ENCODE measurements at regions of chr15 and their contacts with region 1.

Region 1: DNA sequence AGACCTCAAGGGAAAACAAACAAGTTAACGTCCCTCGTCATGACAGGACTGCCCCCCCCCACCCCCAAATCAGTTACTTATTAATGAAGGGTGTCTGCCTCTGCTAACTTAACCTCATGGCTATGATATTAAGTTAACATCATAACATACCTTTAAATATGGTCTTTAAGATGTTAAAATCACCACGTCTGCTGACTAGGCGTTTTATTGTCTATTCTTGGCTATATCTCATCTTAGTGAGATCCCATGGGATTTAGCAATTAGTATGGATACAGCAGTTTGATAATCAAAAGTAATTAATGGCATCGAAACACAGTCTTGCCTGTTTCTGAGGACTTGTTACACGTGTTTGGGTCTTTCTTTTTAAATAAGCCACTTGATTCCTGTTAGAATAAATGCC is 186.9 kb downstream of the FOXB1 start:
- DNase-seq: no peak
- ATAC-seq: no peak
- H3K4me3 ChIP-seq: no peak overlapping the region
- H3K27ac ChIP-seq: no peak overlapping the region
- H3K4me1 ChIP-seq: no peaks in the 10 kb centered on the region
- CTCF ChIP-seq: no peak
- EP300 ChIP-seq: no peak
- POLR2A ChIP-seq: no peak
- RAD21 ChIP-seq: no peak

Region 2: DNA sequence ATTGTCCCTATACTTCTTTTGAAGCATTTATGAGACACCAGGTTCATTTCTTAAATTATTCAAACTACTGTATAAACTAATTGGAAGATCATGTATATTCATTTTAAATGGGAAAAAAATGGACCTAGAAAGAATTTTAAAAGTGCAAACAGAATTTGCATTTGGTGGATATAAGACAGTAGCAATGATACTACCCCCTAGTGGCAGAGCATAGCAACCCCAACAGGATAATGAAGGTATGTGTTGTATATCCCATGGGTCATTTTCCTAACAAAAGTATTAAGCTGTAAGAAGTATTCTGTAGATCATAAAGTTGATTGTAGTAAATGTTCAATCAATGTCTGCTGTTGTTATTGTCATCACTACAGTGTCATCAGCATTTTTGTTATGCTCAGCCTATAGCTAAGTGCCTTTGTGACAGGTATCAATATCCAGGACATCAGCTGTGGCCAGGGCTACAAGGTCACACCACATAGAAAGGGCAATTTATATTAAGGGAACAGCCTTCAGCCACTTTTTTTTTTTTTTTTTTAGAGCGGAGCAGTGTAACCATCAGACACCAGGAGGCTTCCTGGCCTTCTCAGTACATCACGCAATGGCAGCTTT is 11.1 kb before region 1 on chr15:
- CTCF ChIA-PET with region 1: interaction called, 16 read pairs
- POLR2A ChIA-PET with region 1: no interaction called
- DNase-seq: peak; percentile 50 to 60
- ATAC-seq: peak; percentile 72 to 91; a peak in 4 of 6 replicates
- H3K4me3 ChIP-seq: no peak overlapping the region
- H3K27ac ChIP-seq: no peak overlapping the region
- H3K4me1 ChIP-seq: no peaks in the 10 kb centered on the region
- CTCF ChIP-seq: peak; percentile 85
- EP300 ChIP-seq: no peak
- POLR2A ChIP-seq: no peak
- RAD21 ChIP-seq: peak; percentile 67 to 69

Measured in A549 (cell line).